Adrenal gland (tissue), 19 donors: ENCODE measurements at regions of chr2 and their contacts with region 1.

Region 1: GRCh38 chr2:196453613-196454047 is 185.9 kb upstream of the CCDC150 start:
- DNase-seq: peak; percentile 40 to 71 (median 56)
- H3K4me3 ChIP-seq: no peak overlapping the region
- H3K27ac ChIP-seq: no peak overlapping the region
- H3K4me1 ChIP-seq: peaks cover 0 to 6% of the 10 kb centered on the region in 2 donors
- H3K27me3 ChIP-seq: no peaks in the 10 kb centered on the region
- CTCF ChIP-seq: peak; percentile 35 to 65 (median 58)
- POLR2A ChIP-seq: no peak

Region 2: DNA sequence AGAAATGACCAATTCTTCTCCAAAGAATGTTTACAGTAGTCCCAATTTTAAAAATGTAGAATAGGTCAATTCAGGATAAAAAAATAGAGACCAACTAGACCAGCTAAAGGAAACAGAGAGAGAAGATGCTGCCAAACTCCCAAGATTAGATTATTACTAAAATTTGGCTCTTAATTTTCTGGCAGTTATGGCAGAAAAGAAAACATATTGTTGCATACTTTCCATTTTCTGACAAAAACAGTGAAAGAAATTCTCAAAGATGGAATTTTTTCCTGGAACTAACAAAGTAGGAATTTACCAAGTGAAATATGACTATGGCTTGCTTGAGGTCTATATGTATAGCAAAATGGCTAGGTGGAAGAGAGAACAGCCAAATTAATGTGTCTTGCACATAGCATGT is 143.9 kb before region 1 on chr2:
- intact Hi-C with region 1: loop called (anchors 10 kb)
- DNase-seq: no peak
- H3K4me3 ChIP-seq: no peak overlapping the region
- H3K27ac ChIP-seq: no peak overlapping the region
- H3K4me1 ChIP-seq: no peaks in the 10 kb centered on the region
- H3K27me3 ChIP-seq: no peaks in the 10 kb centered on the region
- CTCF ChIP-seq: no peak
- POLR2A ChIP-seq: no peak

Region 3: DNA sequence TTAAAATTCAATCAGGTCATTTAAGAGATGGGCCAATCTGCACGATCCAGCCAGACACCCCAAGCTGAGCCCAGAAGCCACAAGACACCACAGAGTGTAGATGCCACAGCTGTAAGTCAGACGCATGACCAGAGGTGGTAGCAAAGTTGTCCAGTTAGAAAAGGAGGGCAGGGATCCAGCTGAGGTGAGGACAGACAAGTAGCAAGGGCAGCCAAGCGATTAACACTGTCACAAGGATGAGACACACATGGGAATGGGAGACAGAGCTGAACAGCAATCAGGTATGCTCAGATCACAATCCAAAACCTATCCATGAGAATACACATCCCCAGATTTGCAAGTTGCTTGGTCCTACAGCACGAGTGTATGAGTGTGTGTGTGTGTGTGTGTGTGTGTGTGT is 138.8 kb before region 1 on chr2:
- intact Hi-C with region 1: loop called (anchors 10 kb)
- DNase-seq: no peak
- H3K4me3 ChIP-seq: no peak overlapping the region
- H3K27ac ChIP-seq: no peak overlapping the region
- H3K4me1 ChIP-seq: no peaks in the 10 kb centered on the region
- H3K27me3 ChIP-seq: no peaks in the 10 kb centered on the region
- CTCF ChIP-seq: no peak
- POLR2A ChIP-seq: no peak

Region 4: GRCh38 chr2:196558497-196558896 is 104.9 kb after region 1 on chr2:
- intact Hi-C with region 1: no loop called
- DNase-seq: no peak
- H3K4me3 ChIP-seq: no peak overlapping the region
- H3K27ac ChIP-seq: no peak overlapping the region
- H3K4me1 ChIP-seq: no peaks in the 10 kb centered on the region
- H3K27me3 ChIP-seq: no peaks in the 10 kb centered on the region
- CTCF ChIP-seq: no peak
- POLR2A ChIP-seq: no peak